ENCODE measurements at regions of chr4 and their contacts with region 1.

Region 1: GRCh38 chr4:22129454-22130029 is 181.0 kb upstream of the KCNIP4 start:
- DNase-seq: peak; percentile 69
- ATAC-seq: peak; percentile 33; the same call in 1 of the 2 replicates
- H3K4me3 ChIP-seq: no peak overlapping the region
- H3K27ac ChIP-seq: no peak overlapping the region
- H3K4me1 ChIP-seq: no peaks in the 10 kb centered on the region
- H3K27me3 ChIP-seq: no peaks in the 10 kb centered on the region
- CTCF ChIP-seq: peak; percentile 74

Region 2: DNA sequence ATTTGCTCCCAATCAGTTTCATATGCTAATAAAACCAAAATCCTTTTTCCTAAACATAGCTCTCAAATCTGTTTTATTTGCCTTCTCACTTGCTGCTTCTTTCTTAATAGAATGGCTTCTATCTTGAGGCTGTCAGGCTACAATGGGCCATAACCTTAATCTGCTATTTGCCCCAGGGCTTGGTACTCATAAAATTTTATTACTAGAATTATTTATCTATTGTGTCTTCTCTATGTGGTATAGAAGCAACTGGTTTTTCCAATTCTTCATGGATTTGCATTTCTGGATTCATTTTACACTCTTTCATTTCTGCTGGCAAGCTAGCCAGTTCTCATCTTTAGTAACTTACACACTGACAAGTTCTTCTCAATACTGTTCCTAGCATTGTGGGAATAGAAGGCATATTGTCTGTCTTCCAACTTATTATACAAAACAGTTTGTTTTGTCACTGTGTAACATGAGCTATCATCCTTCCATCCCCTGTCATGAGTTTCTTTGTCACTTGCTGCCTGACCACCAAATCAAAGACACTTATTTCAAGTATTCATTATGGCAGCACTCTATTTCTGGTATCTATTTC is 84.4 kb before region 1 on chr4:
- CTCF ChIA-PET with region 1: no interaction called
- POLR2A ChIA-PET with region 1: no interaction called
- intact Hi-C with region 1: no loop called
- DNase-seq: no peak
- ATAC-seq: no peak
- H3K4me3 ChIP-seq: no peak overlapping the region
- H3K27ac ChIP-seq: no peak overlapping the region
- H3K4me1 ChIP-seq: peaks cover 3% of the 10 kb centered on the region; the same call in 1 of the 2 replicates
- H3K27me3 ChIP-seq: no peaks in the 10 kb centered on the region
- CTCF ChIP-seq: no peak

Region 3: DNA sequence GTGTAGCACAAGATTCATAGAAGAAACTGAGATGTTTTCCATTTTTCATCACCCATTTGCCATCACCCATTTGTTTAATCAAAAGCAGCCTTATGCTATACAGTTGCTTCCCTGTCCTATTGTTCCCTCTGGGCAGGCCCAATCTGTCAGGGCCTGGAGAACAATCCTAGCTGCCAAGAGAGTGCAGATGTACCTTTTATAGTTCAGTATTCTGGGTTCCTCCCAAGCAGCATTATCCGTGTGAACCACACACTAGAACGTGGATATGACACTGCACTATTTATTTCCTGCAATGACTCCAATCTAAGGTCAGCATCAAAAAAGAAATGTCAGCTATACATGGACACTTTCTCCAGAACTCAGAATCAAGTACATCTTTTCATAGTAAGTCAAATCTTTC is 117.3 kb after region 1 on chr4:
- CTCF ChIA-PET with region 1: no interaction called
- POLR2A ChIA-PET with region 1: no interaction called
- intact Hi-C with region 1: no loop called
- DNase-seq: no peak
- ATAC-seq: no peak
- H3K4me3 ChIP-seq: no peak overlapping the region
- H3K27ac ChIP-seq: no peak overlapping the region
- H3K4me1 ChIP-seq: peaks cover 17% of the 10 kb centered on the region
- H3K27me3 ChIP-seq: no peaks in the 10 kb centered on the region
- CTCF ChIP-seq: no peak

Region 4: DNA sequence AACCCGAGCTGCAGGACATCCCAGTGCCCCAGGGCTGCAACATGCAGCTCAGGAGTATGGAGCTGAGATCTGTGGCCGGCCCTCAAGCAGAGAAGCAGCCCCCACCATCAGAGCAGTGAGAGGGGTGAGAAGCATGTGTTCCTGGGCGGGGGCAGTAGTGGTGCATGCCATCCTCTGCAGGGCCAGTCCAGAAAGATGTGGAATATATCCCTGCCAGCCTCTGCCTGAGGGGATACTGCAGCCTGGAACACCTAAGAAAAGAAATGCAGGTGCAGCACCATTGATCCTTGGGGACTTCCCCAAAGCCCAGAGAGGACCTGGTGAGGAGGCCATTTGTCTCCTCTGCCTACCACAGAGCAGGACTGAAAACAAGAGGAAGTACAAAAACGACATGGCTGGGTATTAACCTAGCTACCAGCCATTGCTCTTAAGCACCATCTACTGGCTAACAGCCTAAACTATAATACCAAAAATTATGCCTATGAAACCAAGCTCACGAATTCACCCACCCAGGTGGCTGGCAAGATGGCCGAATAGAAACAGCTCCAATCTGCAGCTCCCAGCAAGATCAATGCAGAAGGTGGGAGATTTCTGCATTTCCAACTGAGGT is 227.6 kb after region 1 on chr4:
- CTCF ChIA-PET with region 1: interaction called, 5 read pairs
- POLR2A ChIA-PET with region 1: no interaction called
- intact Hi-C with region 1: loop called (anchors 1 kb)
- DNase-seq: peak; percentile 61
- ATAC-seq: peak; percentile 84
- H3K4me3 ChIP-seq: no peak overlapping the region
- H3K27ac ChIP-seq: no peak overlapping the region
- H3K4me1 ChIP-seq: 0 out of 2 replicates have a peak, but pooled peaks cover 2% of the 10 kb centered on the region
- H3K27me3 ChIP-seq: no peaks in the 10 kb centered on the region
- CTCF ChIP-seq: peak; percentile 61

Region 5: GRCh38 chr4:22625311-22625710 is 495.8 kb after region 1 on chr4:
- CTCF ChIA-PET with region 1: no interaction called
- POLR2A ChIA-PET with region 1: no interaction called
- intact Hi-C with region 1: no loop called
- DNase-seq: peak; percentile 5
- ATAC-seq: no peak
- H3K4me3 ChIP-seq: no peak overlapping the region
- H3K27ac ChIP-seq: no peak overlapping the region
- H3K4me1 ChIP-seq: no peaks in the 10 kb centered on the region
- H3K27me3 ChIP-seq: peaks cover 5% of the 10 kb centered on the region; the same call in 1 of the 2 replicates
- CTCF ChIP-seq: no peak